CD4-positive, alpha-beta T cell (primary cell): ENCODE measurements at regions of chr2 and their contacts with region 1.

Region 1: DNA sequence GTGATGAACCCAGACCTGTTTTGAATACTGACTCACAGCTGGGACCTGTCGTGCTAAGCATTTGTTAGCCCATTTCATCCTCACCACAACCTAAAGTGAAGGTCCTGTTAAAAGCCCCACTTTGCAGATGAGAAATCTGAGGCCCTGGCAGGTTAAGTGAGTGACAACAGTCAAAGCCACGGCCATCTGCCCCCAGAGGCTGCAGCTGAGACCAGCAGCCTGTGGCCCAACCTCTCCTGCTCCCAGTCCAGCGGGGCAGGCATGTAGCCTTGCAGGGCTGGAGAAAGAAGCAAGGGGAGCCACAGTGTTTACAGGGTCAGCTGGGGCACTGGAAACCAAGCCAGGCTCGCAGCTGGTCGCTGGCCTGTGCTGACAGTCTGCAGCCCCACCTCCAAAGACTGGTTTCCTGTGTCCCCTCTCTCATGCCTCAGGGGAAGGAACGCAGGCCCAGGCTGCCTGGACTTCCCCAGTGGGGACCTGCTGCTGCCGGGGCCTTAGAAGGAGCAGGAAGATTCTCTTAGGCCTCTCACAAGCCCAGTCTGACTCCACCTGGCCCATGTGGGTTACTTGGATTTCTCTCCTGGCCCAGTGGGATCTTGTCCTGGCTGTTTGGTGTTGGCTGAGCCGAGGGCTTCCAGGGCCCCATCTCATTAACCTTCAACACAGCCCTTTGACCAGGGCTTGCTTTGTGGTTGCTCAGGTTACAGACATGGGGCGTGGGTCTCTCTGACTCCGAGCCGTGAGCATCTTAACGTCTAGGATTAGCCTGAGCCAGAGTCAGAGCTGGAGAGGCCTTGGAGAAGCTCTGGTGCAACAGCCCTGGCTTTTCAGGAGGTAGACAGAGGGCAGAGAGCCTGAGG is 1.7 kb downstream of the INPP5D start:
- DNase-seq: peak in 4 of 14 experiments; percentile 47 to 64 (median 57)
- ATAC-seq: no peak
- H3K4me3 ChIP-seq: peak overlapping the region; percentile 97
- H3K4me3 Mint-ChIP-seq: peak overlapping the region; percentile 90
- H3K27ac ChIP-seq: peak overlapping the region; percentile 81 to 91
- H3K27ac Mint-ChIP-seq: peak overlapping the region; percentile 95
- H3K4me1 ChIP-seq: peaks cover 69% of the 10 kb centered on the region
- H3K4me1 Mint-ChIP-seq: peaks cover 56% of the 10 kb centered on the region
- H3K27me3 ChIP-seq: no peaks in the 10 kb centered on the region
- H3K27me3 Mint-ChIP-seq: no peaks in the 10 kb centered on the region
- CTCF ChIP-seq: peak; percentile 18

Region 2: GRCh38 chr2:233075966-233076339 is 14.1 kb after region 1 on chr2:
- CTCF ChIA-PET with region 1: interaction called, 37 read pairs
- POLR2A ChIA-PET with region 1: interaction called, 190 read pairs
- intact Hi-C with region 1: loop called (anchors 1 to 2 kb)
- DNase-seq: peak in 7 of 14 experiments; percentile 32 to 76 (median 59)
- ATAC-seq: peak; percentile 78
- H3K4me3 ChIP-seq: peak overlapping the region; percentile 30
- H3K4me3 Mint-ChIP-seq: no peak overlapping the region
- H3K27ac ChIP-seq: peak overlapping the region; percentile 57 to 70
- H3K27ac Mint-ChIP-seq: no peak overlapping the region
- H3K4me1 ChIP-seq: peaks cover 79% of the 10 kb centered on the region
- H3K4me1 Mint-ChIP-seq: peaks cover 37% of the 10 kb centered on the region
- H3K27me3 ChIP-seq: no peaks in the 10 kb centered on the region
- H3K27me3 Mint-ChIP-seq: no peaks in the 10 kb centered on the region
- CTCF ChIP-seq: no peak

Region 3: DNA sequence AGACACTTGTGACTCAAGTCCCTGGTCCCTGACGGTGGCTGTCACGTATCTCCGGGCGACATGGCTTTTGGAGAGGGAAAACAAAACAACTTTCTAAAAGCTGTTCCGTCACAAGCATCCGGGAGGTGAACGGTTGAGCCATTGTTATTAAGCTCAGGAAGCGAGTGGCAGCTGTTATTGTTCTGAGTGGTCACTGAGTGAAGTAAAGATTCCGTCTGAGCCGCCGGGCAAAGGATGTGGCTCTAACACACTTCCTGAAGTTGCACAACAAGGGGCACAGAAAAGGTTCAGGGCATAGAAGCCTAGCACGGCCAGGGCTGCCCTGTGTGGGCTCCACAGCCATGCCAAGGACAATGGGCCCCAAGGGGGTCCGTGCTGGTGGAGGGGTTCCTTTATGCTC is 22.7 kb after region 1 on chr2:
- CTCF ChIA-PET with region 1: interaction called, 37 read pairs
- POLR2A ChIA-PET with region 1: interaction called, 190 read pairs
- intact Hi-C with region 1: no loop called
- DNase-seq: peak in 9 of 14 experiments; percentile 31 to 83 (median 53)
- ATAC-seq: peak; percentile 32
- H3K4me3 ChIP-seq: peak overlapping the region; percentile 19
- H3K4me3 Mint-ChIP-seq: peak overlapping the region; percentile 83
- H3K27ac ChIP-seq: peak overlapping the region; percentile 67 to 71
- H3K27ac Mint-ChIP-seq: peak overlapping the region; percentile 85
- H3K4me1 ChIP-seq: peaks cover 94% of the 10 kb centered on the region
- H3K4me1 Mint-ChIP-seq: peaks cover 88% of the 10 kb centered on the region
- H3K27me3 ChIP-seq: no peaks in the 10 kb centered on the region
- H3K27me3 Mint-ChIP-seq: no peaks in the 10 kb centered on the region
- CTCF ChIP-seq: no peak

Region 4: DNA sequence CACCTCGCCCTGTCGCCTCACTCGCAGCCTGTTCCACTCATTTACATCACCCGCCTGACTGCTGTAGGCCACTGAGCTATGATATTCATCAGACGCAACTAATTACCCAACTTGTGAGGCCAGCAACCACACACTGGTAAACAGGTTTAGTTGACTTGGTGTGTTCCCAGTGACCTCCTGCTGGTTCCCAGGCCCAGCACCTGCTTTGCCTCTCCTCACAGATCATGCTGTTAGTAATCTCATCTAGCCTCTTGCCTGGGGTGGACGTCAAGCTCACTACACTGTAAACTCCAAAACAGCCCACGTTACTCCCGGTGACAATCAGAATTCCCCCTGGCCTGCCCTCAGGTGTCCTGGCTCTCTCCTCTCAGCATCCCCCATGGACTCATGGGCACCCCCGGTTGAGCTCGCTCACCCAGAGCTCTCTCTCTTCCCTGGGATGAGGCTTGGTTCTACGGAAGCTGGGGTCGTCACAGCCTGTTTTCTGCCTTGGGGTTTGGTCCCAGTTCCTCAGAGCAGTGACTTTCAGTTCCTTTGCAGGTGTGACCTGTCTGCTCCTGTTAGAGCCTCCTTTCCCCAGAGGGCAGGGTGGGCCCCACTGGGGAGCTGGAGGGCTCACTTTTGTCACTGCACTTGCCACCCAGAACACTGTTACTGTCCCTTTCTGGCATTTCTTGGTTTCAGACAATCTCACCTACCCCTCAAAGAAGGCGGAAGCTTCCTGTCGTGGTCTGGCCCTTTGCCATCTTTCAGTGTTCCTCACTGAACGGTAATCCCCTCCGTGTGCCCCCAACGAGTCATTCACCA is 38.6 kb after region 1 on chr2:
- CTCF ChIA-PET with region 1: interaction called, 9 read pairs
- POLR2A ChIA-PET with region 1: interaction called, 15 read pairs
- intact Hi-C with region 1: no loop called
- DNase-seq: peak in 12 of 14 experiments; percentile 33 to 82 (median 50)
- ATAC-seq: peak; percentile 60
- H3K4me3 ChIP-seq: peak overlapping the region; percentile 2
- H3K4me3 Mint-ChIP-seq: peak overlapping the region; percentile 48
- H3K27ac ChIP-seq: no peak overlapping the region
- H3K27ac Mint-ChIP-seq: peak overlapping the region; percentile 74
- H3K4me1 ChIP-seq: peaks cover 54% of the 10 kb centered on the region
- H3K4me1 Mint-ChIP-seq: peaks cover 76% of the 10 kb centered on the region
- H3K27me3 ChIP-seq: no peaks in the 10 kb centered on the region
- H3K27me3 Mint-ChIP-seq: no peaks in the 10 kb centered on the region
- CTCF ChIP-seq: no peak

Region 5: GRCh38 chr2:233114421-233114861 is 52.6 kb after region 1 on chr2:
- CTCF ChIA-PET with region 1: no interaction called
- POLR2A ChIA-PET with region 1: no interaction called
- intact Hi-C with region 1: loop called in 1 of 2 experiments (anchors 10 kb)
- DNase-seq: peak in 2 of 14 experiments; percentile 44 to 45
- ATAC-seq: peak; percentile 55
- H3K4me3 ChIP-seq: no peak overlapping the region
- H3K4me3 Mint-ChIP-seq: peak overlapping the region; percentile 48
- H3K27ac ChIP-seq: no peak overlapping the region
- H3K27ac Mint-ChIP-seq: peak overlapping the region; percentile 54
- H3K4me1 ChIP-seq: peaks cover 68% of the 10 kb centered on the region
- H3K4me1 Mint-ChIP-seq: peaks cover 83% of the 10 kb centered on the region
- H3K27me3 ChIP-seq: no peaks in the 10 kb centered on the region
- H3K27me3 Mint-ChIP-seq: no peaks in the 10 kb centered on the region
- CTCF ChIP-seq: no peak